HCT116 (cell line): ENCODE measurements at regions of chr2 and their contacts with region 1.

Region 1: GRCh38 chr2:241081643-241082340 is 20.3 kb downstream of the MTERF4 start:
- DNase-seq: no peak
- ATAC-seq: no peak
- H3K4me3 ChIP-seq: no peak overlapping the region
- H3K27ac ChIP-seq: no peak overlapping the region
- H3K4me1 ChIP-seq: no peaks in the 10 kb centered on the region
- H3K27me3 ChIP-seq: no peaks in the 10 kb centered on the region
- CTCF ChIP-seq: no peak
- POLR2A ChIP-seq: no peak
- RAD21 ChIP-seq: no peak

Region 2: GRCh38 chr2:241064008-241064801 is 17.6 kb before region 1 on chr2:
- CTCF ChIA-PET with region 1: interaction called, 11 read pairs
- POLR2A ChIA-PET with region 1: interaction called, 3 read pairs
- RAD21 ChIA-PET with region 1: no interaction called
- intact Hi-C with region 1: no loop called
- DNase-seq: peak; percentile 19
- ATAC-seq: peak; percentile 89
- H3K4me3 ChIP-seq: peak overlapping the region; percentile 33 to 50
- H3K27ac ChIP-seq: no peak overlapping the region; the same call in 1 of the 2 replicates
- H3K4me1 ChIP-seq: peaks cover 3 to 11% of the 10 kb centered on the region in 2 experiments; a peak in 3 of 4 replicates
- H3K27me3 ChIP-seq: no peaks in the 10 kb centered on the region
- CTCF ChIP-seq: no peak
- POLR2A ChIP-seq: no peak
- RAD21 ChIP-seq: no peak